ENCODE measurements at regions of chr1 and their contacts with region 1.

Region 1: GRCh38 chr1:26500488-26501175 is 28.4 kb downstream of the HMGN2 start:
- DNase-seq: peak; percentile 92 to 97 (median 96)
- ATAC-seq: peak; percentile 85
- H3K4me3 ChIP-seq: peak overlapping the region; percentile 55
- H3K27ac ChIP-seq: peak overlapping the region; percentile 83
- H3K4me1 ChIP-seq: peaks cover 13 to 29% of the 10 kb centered on the region in 2 experiments
- H3K27me3 ChIP-seq: no peaks in the 10 kb centered on the region
- CTCF ChIP-seq: no peak
- EP300 ChIP-seq: no peak; the same call in 1 of the 2 replicates
- POLR2A ChIP-seq: no peak
- RAD21 ChIP-seq: no peak

Region 2: GRCh38 chr1:26254404-26254803 is 246.2 kb before region 1 on chr1:
- CTCF ChIA-PET with region 1: no interaction called
- POLR2A ChIA-PET with region 1: no interaction called
- in situ Hi-C with region 1: no loop called
- intact Hi-C with region 1: no loop called
- DNase-seq: no peak
- ATAC-seq: no peak
- H3K4me3 ChIP-seq: no peak overlapping the region
- H3K27ac ChIP-seq: no peak overlapping the region
- H3K4me1 ChIP-seq: no peaks in the 10 kb centered on the region
- H3K27me3 ChIP-seq: no peaks in the 10 kb centered on the region
- CTCF ChIP-seq: no peak
- EP300 ChIP-seq: no peak
- POLR2A ChIP-seq: no peak
- RAD21 ChIP-seq: no peak

Region 3: DNA sequence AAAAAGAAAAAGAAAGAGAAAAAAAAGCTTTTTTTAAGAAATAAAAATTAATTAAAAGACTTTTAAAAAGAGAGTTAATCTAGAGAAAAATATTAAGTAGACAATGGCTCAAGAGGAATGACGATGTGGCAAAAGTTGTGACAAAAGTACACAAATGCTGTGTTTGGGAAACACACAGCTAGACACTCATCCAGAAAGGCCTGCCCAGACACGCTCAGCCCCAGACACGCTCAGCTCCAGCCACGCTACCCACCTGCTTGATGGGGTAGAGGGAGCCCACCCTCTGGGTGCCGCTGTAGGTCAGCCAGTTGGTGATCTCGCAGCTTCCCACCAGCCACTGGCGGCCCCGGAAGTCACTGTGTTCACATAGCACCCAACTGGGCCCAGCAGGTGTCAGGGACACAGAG is 172.7 kb before region 1 on chr1:
- CTCF ChIA-PET with region 1: no interaction called
- POLR2A ChIA-PET with region 1: no interaction called
- in situ Hi-C with region 1: no loop called
- intact Hi-C with region 1: no loop called
- DNase-seq: peak in 1 of 4 experiments; percentile 45
- ATAC-seq: peak; percentile 54
- H3K4me3 ChIP-seq: no peak overlapping the region
- H3K27ac ChIP-seq: no peak overlapping the region
- H3K4me1 ChIP-seq: peaks cover 2 to 13% of the 10 kb centered on the region in 2 experiments; a peak in 3 of 5 replicates
- H3K27me3 ChIP-seq: no peaks in the 10 kb centered on the region
- CTCF ChIP-seq: peak; percentile 33 to 46 (median 36); a peak in 4 of 6 replicates
- EP300 ChIP-seq: no peak
- POLR2A ChIP-seq: no peak
- RAD21 ChIP-seq: peak in 1 of 2 experiments; percentile 31; a peak in 2 of 4 replicates

Region 4: GRCh38 chr1:26482921-26483680 is 17.5 kb before region 1 on chr1:
- CTCF ChIA-PET with region 1: no interaction called
- POLR2A ChIA-PET with region 1: interaction called, 18 read pairs
- in situ Hi-C with region 1: no loop called
- intact Hi-C with region 1: no loop called
- DNase-seq: no peak
- ATAC-seq: no peak
- H3K4me3 ChIP-seq: no peak overlapping the region
- H3K27ac ChIP-seq: no peak overlapping the region
- H3K4me1 ChIP-seq: peaks cover 15 to 16% of the 10 kb centered on the region in 2 experiments
- H3K27me3 ChIP-seq: no peaks in the 10 kb centered on the region
- CTCF ChIP-seq: no peak
- EP300 ChIP-seq: no peak
- POLR2A ChIP-seq: no peak
- RAD21 ChIP-seq: no peak

Region 5: GRCh38 chr1:26516987-26517765 is 16.5 kb after region 1 on chr1:
- CTCF ChIA-PET with region 1: no interaction called
- POLR2A ChIA-PET with region 1: interaction called, 13 read pairs
- in situ Hi-C with region 1: no loop called
- intact Hi-C with region 1: no loop called
- DNase-seq: no peak
- ATAC-seq: peak; percentile 21
- H3K4me3 ChIP-seq: no peak overlapping the region
- H3K27ac ChIP-seq: no peak overlapping the region
- H3K4me1 ChIP-seq: peaks cover 4 to 5% of the 10 kb centered on the region in 2 experiments; a peak in 3 of 5 replicates
- H3K27me3 ChIP-seq: no peaks in the 10 kb centered on the region
- CTCF ChIP-seq: no peak
- EP300 ChIP-seq: no peak
- POLR2A ChIP-seq: no peak
- RAD21 ChIP-seq: no peak

Region 6: GRCh38 chr1:26541816-26542711 is 41.4 kb after region 1 on chr1:
- CTCF ChIA-PET with region 1: no interaction called
- POLR2A ChIA-PET with region 1: interaction called, 4 read pairs
- in situ Hi-C with region 1: no loop called
- intact Hi-C with region 1: loop called (anchors 1 kb)
- DNase-seq: peak; percentile 91 to 95 (median 92)
- ATAC-seq: peak; percentile 98
- H3K4me3 ChIP-seq: no peak overlapping the region
- H3K27ac ChIP-seq: peak overlapping the region; percentile 68; the same call in 2 of the 3 replicates
- H3K4me1 ChIP-seq: peaks cover 29 to 39% of the 10 kb centered on the region in 2 experiments
- H3K27me3 ChIP-seq: no peaks in the 10 kb centered on the region
- CTCF ChIP-seq: peak; percentile 86 to 89 (median 88)
- EP300 ChIP-seq: peak; percentile 32; the same call in 1 of the 2 replicates
- POLR2A ChIP-seq: no peak
- RAD21 ChIP-seq: peak; percentile 52 to 65

Region 7: DNA sequence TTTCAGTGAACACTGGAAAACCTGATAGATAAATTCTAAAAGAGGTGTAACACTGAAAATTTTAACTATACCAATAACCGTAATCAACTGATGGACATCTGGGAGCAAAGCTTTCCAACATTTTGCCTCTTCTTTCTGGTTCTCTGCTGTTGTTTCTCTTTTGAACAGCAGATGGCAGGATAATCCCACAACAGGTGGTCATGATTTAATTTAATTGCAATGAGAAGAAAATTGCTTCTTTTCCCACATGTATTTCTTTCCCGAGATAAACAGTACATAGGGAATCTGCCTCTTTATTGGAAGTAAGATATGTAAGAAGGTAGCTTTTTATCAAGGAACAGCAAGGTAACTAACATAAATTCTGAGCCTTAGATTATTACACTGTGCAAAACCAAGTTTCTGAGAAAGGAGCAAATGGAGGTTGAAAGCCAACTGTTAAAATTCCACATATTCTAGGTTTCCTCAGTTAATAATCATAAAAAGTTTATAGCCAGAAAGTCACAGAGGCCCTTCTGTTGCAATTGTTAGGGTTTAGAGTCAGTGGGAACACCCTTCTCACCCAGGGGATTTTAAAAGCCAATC is 101.8 kb after region 1 on chr1:
- CTCF ChIA-PET with region 1: no interaction called
- POLR2A ChIA-PET with region 1: no interaction called
- in situ Hi-C with region 1: no loop called
- intact Hi-C with region 1: loop called (anchors 5 kb)
- DNase-seq: peak; percentile 72 to 84 (median 76)
- ATAC-seq: peak; percentile 61
- H3K4me3 ChIP-seq: no peak overlapping the region
- H3K27ac ChIP-seq: no peak overlapping the region
- H3K4me1 ChIP-seq: peaks cover 4 to 22% of the 10 kb centered on the region in 2 experiments; a peak in 4 of 5 replicates
- H3K27me3 ChIP-seq: no peaks in the 10 kb centered on the region
- CTCF ChIP-seq: peak; percentile 83 to 98 (median 83)
- EP300 ChIP-seq: 0 out of 2 replicates have a peak, but pooled peaks have one; percentile 12
- POLR2A ChIP-seq: no peak
- RAD21 ChIP-seq: peak; percentile 100

Measured in K562 (cell line).